ENCODE measurements at regions of chr12 and their contacts with region 1.

Region 1: DNA sequence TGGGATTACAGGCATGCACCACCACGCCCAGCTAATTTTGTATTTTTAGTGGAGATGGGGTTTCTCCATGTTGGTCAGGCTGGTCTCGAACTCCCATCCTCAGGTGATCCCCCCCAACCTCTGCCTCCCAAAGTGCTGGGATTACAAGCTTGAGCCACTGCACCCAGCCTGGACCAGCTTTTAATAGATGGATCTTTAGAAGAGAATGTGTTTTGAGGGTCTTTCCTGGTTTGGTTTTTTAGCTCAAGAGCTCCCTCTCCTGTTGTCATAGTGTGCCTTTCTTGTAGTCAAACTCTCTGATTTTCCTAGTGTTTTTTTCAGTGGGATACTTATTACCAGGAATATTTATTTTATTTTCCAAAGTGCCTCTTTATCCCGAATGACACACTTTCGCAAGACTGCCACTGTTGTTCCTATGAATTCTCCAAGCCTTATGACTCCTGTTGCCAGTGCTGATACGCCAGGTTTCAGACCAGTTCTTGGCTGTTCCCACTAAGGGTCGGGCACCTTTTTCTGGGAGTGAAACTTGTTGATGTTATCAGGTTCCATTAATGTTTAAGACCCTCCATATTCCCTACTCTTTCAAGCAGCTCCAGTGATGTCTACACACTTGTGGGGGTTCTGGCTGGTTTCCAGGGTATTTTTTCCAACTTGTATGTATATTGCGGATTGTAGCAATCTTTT is 31.5 kb upstream of the LIMA1 start:
- DNase-seq: peak; percentile 16
- H3K4me3 ChIP-seq: no peak overlapping the region
- H3K27me3 ChIP-seq: no peaks in the 10 kb centered on the region
- CTCF ChIP-seq: peak; percentile 66

Region 2: GRCh38 chr12:50084775-50085614 is 229.8 kb before region 1 on chr12 and contains the start of gene SMARCD1:
- CTCF ChIA-PET with region 1: interaction called, 11 read pairs
- POLR2A ChIA-PET with region 1: interaction called, 3 read pairs
- DNase-seq: peak; percentile 48
- H3K4me3 ChIP-seq: peak within 1 kb of the TSS; percentile 62
- H3K27me3 ChIP-seq: no peaks in the 10 kb centered on the region; the same call in 1 of the 2 replicates
- CTCF ChIP-seq: peak; percentile 78
- polyA plus RNA-seq, gene SMARCD1: 48.9 and 56.0 TPM in 2 replicates

Region 3: DNA sequence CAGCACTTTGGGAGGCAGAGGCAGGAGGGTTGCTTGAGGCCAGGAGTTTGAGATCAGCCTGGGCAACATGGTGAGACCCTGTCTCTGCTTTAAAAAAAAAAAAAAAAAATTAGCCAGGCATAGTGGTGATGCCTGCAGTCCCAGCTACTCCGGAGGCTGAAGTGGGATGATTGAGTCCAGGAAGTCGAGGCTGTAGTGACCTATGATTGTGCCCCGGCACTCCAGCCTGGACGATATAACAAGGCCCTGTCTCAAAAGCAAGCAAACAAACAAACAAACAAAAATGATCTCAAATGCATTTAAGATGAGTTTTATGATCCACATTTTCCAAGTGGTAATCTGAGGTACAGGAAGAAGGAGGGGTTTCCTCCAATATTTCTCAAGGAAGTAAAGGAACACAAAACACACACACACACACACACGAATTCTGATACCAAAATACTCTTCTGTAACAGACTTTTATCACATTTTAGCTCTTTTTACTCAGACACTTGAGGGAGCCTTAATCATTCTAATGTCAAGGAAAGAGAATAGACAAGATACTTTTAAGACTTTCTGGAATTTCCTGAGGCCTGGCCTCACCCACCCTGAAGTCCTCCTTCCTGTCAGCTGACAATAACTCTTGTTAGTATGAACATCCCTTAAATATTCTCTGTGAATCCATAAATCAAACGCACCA is 103.2 kb before region 1 on chr12:
- CTCF ChIA-PET with region 1: interaction called, 13 read pairs
- POLR2A ChIA-PET with region 1: interaction called, 3 read pairs
- DNase-seq: no peak
- H3K4me3 ChIP-seq: no peak overlapping the region
- H3K27me3 ChIP-seq: no peaks in the 10 kb centered on the region
- CTCF ChIP-seq: no peak

Region 4: DNA sequence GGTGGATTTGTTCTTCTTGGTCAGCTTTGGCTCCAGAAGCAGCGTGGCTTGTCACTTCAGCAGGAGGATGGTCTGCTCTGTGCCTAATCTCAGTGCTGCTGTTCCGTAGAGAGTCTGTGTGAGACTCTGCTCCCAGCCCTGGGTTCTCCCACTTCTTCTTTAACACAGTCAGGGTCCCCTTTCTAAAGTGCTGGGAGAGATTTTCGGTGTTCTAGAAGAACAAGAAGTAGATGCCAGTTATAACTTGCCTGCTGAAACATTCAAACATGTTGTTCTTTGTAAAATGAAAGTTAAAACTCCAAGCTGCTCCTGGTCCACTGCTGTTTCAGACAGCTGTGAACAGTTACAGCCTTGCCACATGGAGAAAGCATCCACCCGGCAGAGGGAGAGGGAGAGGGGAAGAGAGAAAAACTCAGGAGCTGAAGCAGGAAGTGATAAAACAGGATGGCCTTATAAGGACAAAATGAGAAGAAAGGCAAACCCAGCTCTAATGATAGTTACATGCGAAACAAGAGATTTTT is 92.4 kb before region 1 on chr12:
- CTCF ChIA-PET with region 1: interaction called, 17 read pairs
- POLR2A ChIA-PET with region 1: no interaction called
- DNase-seq: peak; percentile 84
- H3K4me3 ChIP-seq: peak overlapping the region; percentile 98
- H3K27me3 ChIP-seq: no peaks in the 10 kb centered on the region
- CTCF ChIP-seq: peak; percentile 55

Measured in BJ (cell line).